ENCODE measurements at regions of chr17 and their contacts with region 1.

Region 1: DNA sequence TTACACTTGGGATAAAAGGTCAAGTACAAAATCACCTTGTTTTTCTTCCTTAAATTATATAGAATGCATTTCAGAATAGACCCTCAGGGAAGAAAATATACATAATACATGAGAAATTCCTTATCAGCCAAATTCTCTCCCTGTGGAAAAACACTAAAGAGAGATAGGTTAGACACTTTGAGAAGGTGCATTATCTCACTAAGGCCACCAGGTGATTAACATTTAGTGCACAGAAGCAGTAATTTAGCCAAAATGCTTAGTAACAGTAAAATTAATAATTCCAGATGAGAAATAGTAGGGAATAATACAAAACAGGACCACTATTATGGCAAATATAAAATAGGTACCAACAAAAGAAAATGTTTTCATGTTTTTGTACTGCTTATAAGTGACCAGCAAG is 185.3 kb upstream of the C17orf78 start:
- DNase-seq: no peak
- H3K4me3 ChIP-seq: no peak overlapping the region
- H3K27ac ChIP-seq: no peak overlapping the region
- H3K4me1 ChIP-seq: peaks cover 8% of the 10 kb centered on the region
- H3K27me3 ChIP-seq: no peaks in the 10 kb centered on the region
- CTCF ChIP-seq: no peak
- POLR2A ChIP-seq: no peak

Region 2: GRCh38 chr17:37212179-37212578 is 21.7 kb after region 1 on chr17:
- CTCF ChIA-PET with region 1: interaction called, 12 read pairs
- POLR2A ChIA-PET with region 1: no interaction called
- dilution Hi-C with region 1: no loop called
- intact Hi-C with region 1: no loop called
- DNase-seq: peak; percentile 13
- H3K4me3 ChIP-seq: no peak overlapping the region
- H3K27ac ChIP-seq: no peak overlapping the region
- H3K4me1 ChIP-seq: no peaks in the 10 kb centered on the region
- H3K27me3 ChIP-seq: no peaks in the 10 kb centered on the region
- CTCF ChIP-seq: peak; percentile 3 to 34
- POLR2A ChIP-seq: no peak

Measured in endothelial cell of umbilical vein (primary cell).